B cell (primary cell): ENCODE measurements at regions of chr5 and their contacts with region 1.

Region 1: GRCh38 chr5:90783460-90784333 is 225.1 kb downstream of the ADGRV1 start:
- DNase-seq: peak; percentile 61
- ATAC-seq: peak; percentile 66
- H3K4me3 ChIP-seq: no peak overlapping the region
- H3K4me3 Mint-ChIP-seq: no peak overlapping the region
- H3K27ac ChIP-seq: no peak overlapping the region
- H3K27ac Mint-ChIP-seq: no peak overlapping the region
- H3K4me1 ChIP-seq: no peaks in the 10 kb centered on the region
- H3K4me1 Mint-ChIP-seq: no peaks in the 10 kb centered on the region
- H3K27me3 ChIP-seq: no peaks in the 10 kb centered on the region
- H3K27me3 Mint-ChIP-seq: peaks cover 4% of the 10 kb centered on the region
- CTCF ChIP-seq: peak; percentile 98

Region 2: GRCh38 chr5:90264689-90265544 is 518.8 kb before region 1 on chr5:
- CTCF ChIA-PET with region 1: no interaction called
- POLR2A ChIA-PET with region 1: no interaction called
- intact Hi-C with region 1: loop called (anchors 2 kb)
- DNase-seq: peak; percentile 79
- ATAC-seq: peak; percentile 58
- H3K4me3 ChIP-seq: no peak overlapping the region
- H3K4me3 Mint-ChIP-seq: peak overlapping the region; percentile 64
- H3K27ac ChIP-seq: no peak overlapping the region
- H3K27ac Mint-ChIP-seq: no peak overlapping the region
- H3K4me1 ChIP-seq: peaks cover 6 to 7% of the 10 kb centered on the region in 2 donors
- H3K4me1 Mint-ChIP-seq: peaks cover 7% of the 10 kb centered on the region
- H3K27me3 ChIP-seq: no peaks in the 10 kb centered on the region
- H3K27me3 Mint-ChIP-seq: peaks cover 2% of the 10 kb centered on the region
- CTCF ChIP-seq: peak; percentile 98

Region 3: GRCh38 chr5:90301248-90301647 is 482.4 kb before region 1 on chr5:
- CTCF ChIA-PET with region 1: no interaction called
- POLR2A ChIA-PET with region 1: no interaction called
- intact Hi-C with region 1: no loop called
- DNase-seq: no peak
- ATAC-seq: no peak
- H3K4me3 ChIP-seq: no peak overlapping the region
- H3K4me3 Mint-ChIP-seq: no peak overlapping the region
- H3K27ac ChIP-seq: no peak overlapping the region
- H3K27ac Mint-ChIP-seq: no peak overlapping the region
- H3K4me1 ChIP-seq: peaks cover 3 to 4% of the 10 kb centered on the region in 2 donors
- H3K4me1 Mint-ChIP-seq: peaks cover 10% of the 10 kb centered on the region
- H3K27me3 ChIP-seq: no peaks in the 10 kb centered on the region
- H3K27me3 Mint-ChIP-seq: peaks cover 9% of the 10 kb centered on the region
- CTCF ChIP-seq: no peak

Region 4: GRCh38 chr5:91194824-91195381 is 411.2 kb after region 1 on chr5:
- CTCF ChIA-PET with region 1: no interaction called
- POLR2A ChIA-PET with region 1: no interaction called
- intact Hi-C with region 1: no loop called
- DNase-seq: no peak
- ATAC-seq: no peak
- H3K4me3 ChIP-seq: no peak overlapping the region
- H3K4me3 Mint-ChIP-seq: no peak overlapping the region
- H3K27ac ChIP-seq: no peak overlapping the region
- H3K27ac Mint-ChIP-seq: no peak overlapping the region
- H3K4me1 ChIP-seq: no peaks in the 10 kb centered on the region
- H3K4me1 Mint-ChIP-seq: no peaks in the 10 kb centered on the region
- H3K27me3 ChIP-seq: no peaks in the 10 kb centered on the region
- H3K27me3 Mint-ChIP-seq: peaks cover 25% of the 10 kb centered on the region
- CTCF ChIP-seq: no peak